ENCODE measurements at regions of chr11 and their contacts with region 1.

Region 1: DNA sequence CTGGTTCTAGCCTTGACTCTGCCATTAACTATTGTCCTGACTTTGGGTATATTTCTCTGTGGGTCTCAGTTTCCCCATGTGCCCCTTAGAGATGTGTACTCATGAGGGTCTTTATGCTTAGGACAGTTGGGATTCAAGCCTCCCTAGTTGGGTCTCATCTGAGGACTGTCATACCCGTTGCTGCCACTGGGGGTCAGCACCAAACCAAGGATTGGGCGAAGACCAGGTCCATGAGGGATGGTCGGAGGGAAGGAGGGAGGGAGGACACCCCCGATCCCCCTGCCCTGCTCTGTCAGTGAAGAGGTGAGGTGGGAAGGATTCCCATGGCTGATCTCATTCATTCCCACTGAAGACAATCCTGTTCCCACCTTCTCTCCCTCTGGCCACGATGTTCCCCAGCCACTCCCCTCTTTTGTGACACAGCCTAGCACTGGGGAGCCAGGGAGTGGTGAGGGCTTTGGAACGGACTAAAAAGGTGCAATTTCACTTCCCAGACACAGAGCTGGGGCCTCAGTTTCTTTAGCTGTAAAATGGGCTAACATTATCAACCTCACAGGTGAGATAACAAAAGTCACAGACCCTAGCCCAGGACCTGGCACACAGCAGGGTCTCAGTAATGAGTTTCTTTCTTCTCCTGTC is 12.4 kb upstream of the KLHL35 start:
- DNase-seq: peak; percentile 22
- ATAC-seq: peak; percentile 91
- H3K4me3 ChIP-seq: no peak overlapping the region
- H3K27ac ChIP-seq: no peak overlapping the region
- H3K4me1 ChIP-seq: no peaks in the 10 kb centered on the region
- H3K27me3 ChIP-seq: no peaks in the 10 kb centered on the region
- CTCF ChIP-seq: peak; percentile 91 to 98 (median 93)
- POLR2A ChIP-seq: no peak
- RAD21 ChIP-seq: peak; percentile 98

Region 2: GRCh38 chr11:75365711-75366181 is 79.7 kb before region 1 on chr11:
- CTCF ChIA-PET with region 1: no interaction called
- POLR2A ChIA-PET with region 1: no interaction called
- RAD21 ChIA-PET with region 1: no interaction called
- intact Hi-C with region 1: no loop called
- DNase-seq: no peak
- ATAC-seq: no peak
- H3K4me3 ChIP-seq: no peak overlapping the region
- H3K27ac ChIP-seq: no peak overlapping the region
- H3K4me1 ChIP-seq: peaks cover 0 to 5% of the 10 kb centered on the region in 2 experiments; a peak in 1 of 4 replicates
- H3K27me3 ChIP-seq: no peaks in the 10 kb centered on the region
- CTCF ChIP-seq: no peak
- POLR2A ChIP-seq: no peak
- RAD21 ChIP-seq: no peak

Region 3: GRCh38 chr11:75532200-75533048 is 87.0 kb after region 1 on chr11:
- CTCF ChIA-PET with region 1: interaction called, 34 read pairs
- POLR2A ChIA-PET with region 1: no interaction called
- RAD21 ChIA-PET with region 1: interaction called, 3 to 7 read pairs
- intact Hi-C with region 1: loop called (anchors 1 kb)
- DNase-seq: peak; percentile 56
- ATAC-seq: peak; percentile 45
- H3K4me3 ChIP-seq: peak overlapping the region in 1 of 2 experiments; percentile 35; a peak in 1 of 4 replicates
- H3K27ac ChIP-seq: no peak overlapping the region; the same call in 1 of the 2 replicates
- H3K4me1 ChIP-seq: peaks cover 33 to 51% of the 10 kb centered on the region in 2 experiments
- H3K27me3 ChIP-seq: no peaks in the 10 kb centered on the region
- CTCF ChIP-seq: peak; percentile 82 to 96 (median 82)
- POLR2A ChIP-seq: no peak
- RAD21 ChIP-seq: peak; percentile 99

Region 4: GRCh38 chr11:75577207-75577606 is 131.8 kb after region 1 on chr11:
- CTCF ChIA-PET with region 1: no interaction called
- POLR2A ChIA-PET with region 1: no interaction called
- RAD21 ChIA-PET with region 1: no interaction called
- intact Hi-C with region 1: loop called (anchors 2 kb)
- DNase-seq: no peak
- ATAC-seq: peak; percentile 75
- H3K4me3 ChIP-seq: no peak overlapping the region
- H3K27ac ChIP-seq: no peak overlapping the region
- H3K4me1 ChIP-seq: peaks cover 0 to 4% of the 10 kb centered on the region in 2 experiments; a peak in 1 of 4 replicates
- H3K27me3 ChIP-seq: peaks cover 4% of the 10 kb centered on the region; the same call in 1 of the 2 replicates
- CTCF ChIP-seq: peak; percentile 13 to 70 (median 47); a peak in 5 of 6 replicates
- POLR2A ChIP-seq: no peak
- RAD21 ChIP-seq: peak; percentile 13; the same call in 1 of the 2 replicates

Measured in HCT116 (cell line).